ENCODE measurements at regions of chr20 and their contacts with region 1.

Region 1: DNA sequence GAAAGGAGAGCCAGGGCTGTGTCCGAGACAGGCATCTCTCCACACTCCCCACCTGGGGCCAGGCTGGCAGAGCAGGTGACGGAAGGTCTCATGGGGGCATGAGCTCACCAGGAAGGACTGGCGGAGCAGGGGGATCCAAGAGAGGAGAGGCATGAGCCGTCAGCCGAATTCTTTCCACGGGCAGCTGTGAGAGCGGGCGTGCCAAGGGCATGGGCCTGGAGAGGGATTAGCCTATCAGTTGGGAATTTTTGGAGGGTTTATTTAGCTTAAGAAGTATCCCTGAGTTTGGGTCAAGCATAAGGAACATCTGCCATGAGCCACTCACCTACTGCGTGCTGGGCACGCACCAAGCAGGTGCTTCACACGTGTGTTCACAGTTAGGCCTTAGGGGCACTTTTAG is 60.2 kb upstream of the ZNFX1 start:
- DNase-seq: no peak

Region 2: DNA sequence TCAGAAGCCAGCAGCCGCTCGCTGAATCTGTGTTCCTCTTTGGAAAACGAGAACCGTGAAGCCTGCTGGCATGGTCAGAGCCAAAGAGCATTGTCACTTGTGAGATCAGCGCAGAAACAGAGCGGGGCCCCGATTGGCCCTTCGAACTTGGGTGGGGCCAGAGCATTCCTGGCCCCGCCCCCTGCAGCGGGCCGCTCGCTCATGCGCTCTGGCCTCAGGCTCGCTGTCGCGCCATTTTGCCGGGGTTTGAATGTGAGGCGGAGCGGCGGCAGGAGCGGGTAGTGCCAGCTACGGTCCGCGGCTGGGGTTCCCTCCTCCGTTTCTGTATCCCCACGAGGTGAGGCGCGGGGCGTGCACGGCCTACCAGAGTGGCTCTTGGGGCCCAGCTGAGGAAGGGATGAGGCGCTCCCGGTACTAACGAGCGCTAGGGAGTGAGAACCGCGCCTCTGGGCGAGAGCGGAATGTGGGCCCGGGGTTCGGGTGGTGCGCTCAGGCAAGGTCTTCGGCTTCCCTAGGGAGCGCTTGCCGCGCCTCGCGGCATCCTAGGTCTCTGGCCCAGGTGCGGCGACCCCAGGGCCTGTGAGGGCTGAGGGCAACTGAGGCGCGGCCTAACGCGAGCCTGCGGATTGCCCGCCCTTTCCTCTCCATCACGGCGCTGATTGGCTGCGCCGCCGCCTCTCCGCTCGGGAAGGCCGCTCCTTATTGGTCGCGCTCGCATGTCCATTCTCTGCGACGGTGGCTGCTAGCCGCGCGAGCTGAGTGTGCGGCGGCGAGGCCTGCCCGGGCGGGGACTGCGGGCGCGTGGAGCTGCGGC is 291.8 kb before region 1 on chr20 and contains the start of gene CSE1L:
- intact Hi-C with region 1: no loop called
- DNase-seq: peak; percentile 93 to 99 (median 97)

Region 3: GRCh38 chr20:49281059-49281912 is 56.8 kb before region 1 on chr20:
- intact Hi-C with region 1: no loop called
- DNase-seq: no peak

Region 4: DNA sequence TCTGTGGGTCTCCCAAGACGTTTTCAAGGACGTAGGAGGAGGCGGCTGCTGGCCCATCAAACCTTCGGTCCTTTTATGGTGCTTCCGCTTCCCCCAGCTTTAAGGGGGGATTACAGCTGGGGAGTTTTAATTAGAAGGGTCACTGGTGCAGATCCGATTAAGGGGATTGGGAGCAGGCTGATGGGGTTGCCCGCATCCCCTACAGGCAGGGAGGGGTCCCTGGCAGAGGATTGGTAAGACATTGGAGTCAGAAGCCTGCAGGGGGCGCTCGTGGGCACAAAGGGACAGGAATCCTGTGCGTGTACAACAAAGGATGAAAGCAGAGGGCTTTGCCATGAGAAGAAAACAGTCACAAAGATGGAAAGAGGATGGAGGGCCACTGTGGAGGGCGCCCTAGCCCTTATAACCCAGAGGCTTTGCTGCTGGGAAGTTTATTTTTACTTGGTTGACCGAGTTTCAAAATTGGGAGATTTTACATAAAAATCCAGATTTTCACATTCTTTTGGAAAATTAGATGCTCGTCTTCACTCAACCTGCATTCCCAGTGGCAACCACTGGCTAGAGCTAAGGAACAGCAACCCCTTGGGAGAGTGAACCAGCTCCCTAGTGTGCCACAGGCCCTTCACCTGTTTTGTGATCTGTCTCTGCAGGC is 46.5 kb after region 1 on chr20:
- intact Hi-C with region 1: no loop called
- DNase-seq: peak; percentile 42 to 97 (median 78)

Region 5: GRCh38 chr20:49484180-49485140 is 146.4 kb after region 1 on chr20:
- intact Hi-C with region 1: loop called (anchors 1 kb)
- DNase-seq: peak; percentile 68 to 98 (median 86)

Region 6: GRCh38 chr20:49508435-49509199 is 170.6 kb after region 1 on chr20:
- intact Hi-C with region 1: loop called (anchors 1 kb)
- DNase-seq: peak in 4 of 10 donors; percentile 18 to 81 (median 57)

Region 7: GRCh38 chr20:49534255-49534712 is 196.2 kb after region 1 on chr20:
- intact Hi-C with region 1: loop called (anchors 1 kb)
- DNase-seq: peak in 8 of 10 donors; percentile 25 to 92 (median 61)